ENCODE measurements at regions of chr12 and their contacts with region 1.

Region 1: GRCh38 chr12:14373217-14373616 is 7.7 kb downstream of the ATF7IP start:
- DNase-seq: no peak
- H3K4me3 ChIP-seq: no peak overlapping the region
- H3K27ac ChIP-seq: no peak overlapping the region
- H3K4me1 ChIP-seq: peaks cover 3 to 13% (median 5%) of the 10 kb centered on the region in 4 experiments
- H3K27me3 ChIP-seq: no peaks in the 10 kb centered on the region

Region 2: DNA sequence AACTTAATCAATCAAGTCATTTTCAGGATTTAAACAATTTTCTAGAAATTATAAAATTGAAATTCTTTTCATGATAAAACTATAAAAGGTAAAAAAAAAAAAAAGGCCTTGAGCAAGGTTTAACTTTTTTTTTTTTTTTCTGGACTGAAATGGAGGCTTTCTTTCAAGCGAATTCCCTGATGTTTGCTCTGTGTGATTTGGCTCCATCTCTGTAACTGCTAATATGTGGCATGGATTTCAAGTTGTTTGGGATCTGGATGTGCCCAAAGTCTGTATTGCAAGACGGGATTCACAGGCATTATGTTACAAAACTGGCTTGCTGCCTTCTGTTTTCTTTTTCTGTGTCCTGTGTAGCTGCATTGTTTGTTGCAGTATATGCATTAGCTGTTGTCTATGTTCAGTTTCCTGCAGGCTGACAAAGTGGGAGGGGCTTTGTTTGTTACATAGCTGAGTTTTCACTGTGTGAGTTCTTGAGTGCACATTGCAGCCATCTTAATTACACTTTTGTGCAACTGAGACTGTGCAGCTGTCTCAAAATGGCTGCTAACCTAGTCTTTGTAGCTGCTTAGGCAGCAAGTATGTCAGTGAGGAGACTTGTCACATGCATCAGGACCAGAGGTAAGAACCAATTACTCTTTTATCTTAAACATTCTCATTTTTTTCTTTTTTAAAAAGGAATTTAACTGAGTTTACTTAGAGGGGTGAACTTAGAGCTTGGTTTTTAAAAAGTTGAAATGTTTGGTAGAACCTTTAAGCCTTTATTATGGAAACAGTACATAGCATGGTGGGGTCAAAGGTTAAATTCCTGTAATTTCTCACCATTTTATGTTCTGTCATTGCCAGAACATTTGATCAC is 11.8 kb after region 1 on chr12:
- CTCF ChIA-PET with region 1: interaction called, 39 read pairs
- POLR2A ChIA-PET with region 1: no interaction called
- DNase-seq: peak; percentile 87 to 97 (median 96)
- H3K4me3 ChIP-seq: peak overlapping the region in 3 of 7 experiments; percentile 36 to 42 (median 42)
- H3K27ac ChIP-seq: peak overlapping the region in 1 of 2 experiments; percentile 62
- H3K4me1 ChIP-seq: peaks cover 0 to 21% (median 2%) of the 10 kb centered on the region in 4 experiments
- H3K27me3 ChIP-seq: no peaks in the 10 kb centered on the region